ENCODE measurements at regions of chr3 and their contacts with region 1.

Region 1: GRCh38 chr3:46705022-46705530 is 3.9 kb downstream of the TMIE start:
- DNase-seq: no peak
- H3K4me3 ChIP-seq: no peak overlapping the region
- H3K27me3 ChIP-seq: peaks cover 21% of the 10 kb centered on the region
- CTCF ChIP-seq: peak; percentile 91

Region 2: DNA sequence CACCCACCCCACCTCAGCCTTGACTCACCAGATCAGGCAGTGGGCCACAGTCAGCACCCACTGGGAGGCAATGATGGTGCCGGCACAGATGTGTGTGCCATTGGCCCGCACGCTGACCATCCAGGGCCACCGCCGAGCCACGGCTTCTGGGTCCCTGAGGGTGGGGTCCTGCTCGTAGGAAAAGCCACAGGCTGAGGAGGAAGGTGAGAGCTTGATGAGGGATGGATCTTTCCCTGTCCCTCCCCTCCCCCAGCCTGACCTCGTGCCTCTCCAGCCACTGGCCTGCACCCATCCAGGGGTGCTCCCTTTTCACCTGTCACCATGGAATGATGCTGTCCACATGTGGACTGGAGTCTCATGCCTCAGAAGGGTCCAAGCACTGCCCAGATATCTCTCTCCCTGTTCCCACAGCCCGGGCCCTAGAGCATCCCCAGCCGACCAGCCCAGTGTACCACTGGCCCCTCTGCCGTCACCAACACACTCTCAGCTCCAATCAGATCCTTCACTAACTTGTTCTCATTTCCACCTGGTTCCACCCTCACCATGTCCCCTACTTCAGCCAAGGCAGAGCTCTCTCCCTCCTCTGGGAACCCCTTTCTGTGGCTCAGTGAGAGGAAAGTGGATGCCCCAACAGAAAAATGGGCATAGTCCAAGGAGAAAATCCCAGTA is 10.6 kb after region 1 on chr3:
- CTCF ChIA-PET with region 1: interaction called, 15 read pairs
- POLR2A ChIA-PET with region 1: no interaction called
- DNase-seq: no peak
- H3K4me3 ChIP-seq: no peak overlapping the region
- H3K27me3 ChIP-seq: peaks cover 3% of the 10 kb centered on the region
- CTCF ChIP-seq: no peak

Region 3: GRCh38 chr3:46903331-46904071 is 198.4 kb after region 1 on chr3:
- CTCF ChIA-PET with region 1: interaction called, 21 read pairs
- POLR2A ChIA-PET with region 1: no interaction called
- DNase-seq: no peak
- H3K4me3 ChIP-seq: no peak overlapping the region
- H3K27me3 ChIP-seq: no peaks in the 10 kb centered on the region
- CTCF ChIP-seq: no peak

Region 4: DNA sequence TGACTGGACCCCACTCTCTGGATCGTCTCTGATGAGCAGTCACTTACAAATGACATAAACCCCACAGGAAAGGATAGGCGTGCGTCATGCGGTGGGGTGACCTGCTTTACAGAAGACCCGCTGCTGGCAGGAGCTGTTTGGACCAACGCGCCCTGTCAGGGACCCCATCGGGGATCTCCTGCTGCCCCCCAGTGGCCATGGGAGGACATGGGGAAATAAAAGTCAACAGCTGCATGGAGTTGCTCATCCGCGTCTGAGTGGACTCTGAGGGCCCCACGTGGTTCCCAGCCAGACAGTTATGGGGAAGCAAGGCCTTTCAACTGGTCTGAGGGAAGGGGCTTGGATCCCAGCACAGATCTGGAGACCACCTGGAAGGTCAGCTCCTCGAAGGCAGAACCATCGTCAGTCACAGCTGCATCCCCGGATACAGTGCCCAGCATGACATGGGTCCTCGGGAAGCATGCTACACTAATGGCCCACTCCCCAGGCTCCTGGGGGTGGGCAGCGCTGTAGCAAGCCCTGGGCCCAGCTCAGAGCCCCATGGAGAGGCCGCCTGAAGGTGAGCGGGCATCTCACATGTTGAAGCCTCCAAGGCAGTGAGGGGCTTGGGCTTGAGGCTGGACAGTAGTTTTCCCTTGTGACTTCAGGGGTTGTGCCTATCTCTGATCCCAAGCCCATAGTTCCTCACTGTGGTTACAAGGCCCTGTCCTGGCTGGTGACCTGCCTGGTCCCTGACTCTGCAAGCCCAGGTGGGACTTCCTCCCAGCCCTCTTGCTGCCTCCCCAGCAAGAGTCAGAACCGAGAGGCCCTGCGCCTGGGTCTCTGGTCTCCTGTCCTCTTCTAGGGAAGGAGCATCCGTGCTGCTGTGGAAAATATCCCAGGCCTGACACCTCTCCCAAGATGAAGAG is 204.7 kb after region 1 on chr3:
- CTCF ChIA-PET with region 1: interaction called, 21 read pairs
- POLR2A ChIA-PET with region 1: no interaction called
- DNase-seq: no peak
- H3K4me3 ChIP-seq: no peak overlapping the region
- H3K27me3 ChIP-seq: no peaks in the 10 kb centered on the region
- CTCF ChIP-seq: peak; percentile 94